Activated CD8-positive, alpha-beta memory T cell treated with anti-CD3 and anti-CD28 coated beads, Interleukin-2, amount 10 ng/mL, durations not matched to agents 7 days and 5 days (primary cell): ENCODE measurements at regions of chr15 and their contacts with region 1.

Region 1: DNA sequence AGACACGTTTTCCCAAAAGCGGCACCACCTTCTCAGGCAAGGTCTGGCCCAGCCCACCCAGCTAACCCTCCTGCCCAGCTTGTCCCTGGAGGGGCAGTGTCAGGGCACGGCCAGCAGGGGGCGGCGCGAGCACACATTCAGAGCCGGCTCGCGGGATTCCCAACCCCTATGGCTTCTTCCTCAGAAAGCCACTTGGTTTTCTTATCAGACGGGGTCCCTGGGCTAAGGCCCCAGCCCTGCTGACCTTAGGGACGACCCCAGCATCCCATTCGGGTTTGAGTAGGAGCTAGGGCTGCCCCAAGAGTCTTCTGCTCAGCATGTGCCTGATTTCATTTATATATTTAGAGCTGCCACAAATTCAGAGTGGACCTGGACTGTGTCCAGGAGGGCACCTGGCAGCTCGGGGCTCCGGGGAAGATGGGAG is 14.5 kb downstream of the RLBP1 start:
- DNase-seq: peak; percentile 76
- ATAC-seq: peak; percentile 73
- H3K4me3 Mint-ChIP-seq: no peak overlapping the region
- H3K27ac Mint-ChIP-seq: no peak overlapping the region
- H3K4me1 Mint-ChIP-seq: peaks cover 36% of the 10 kb centered on the region
- H3K27me3 Mint-ChIP-seq: peaks cover 7% of the 10 kb centered on the region

Region 2: GRCh38 chr15:89057504-89058133 is 149.3 kb before region 1 on chr15:
- CTCF ChIA-PET with region 1: interaction called, 25 read pairs
- DNase-seq: peak; percentile 84
- ATAC-seq: peak; percentile 93
- H3K4me3 Mint-ChIP-seq: no peak overlapping the region
- H3K27ac Mint-ChIP-seq: no peak overlapping the region
- H3K4me1 Mint-ChIP-seq: peaks cover 6% of the 10 kb centered on the region
- H3K27me3 Mint-ChIP-seq: peaks cover 11% of the 10 kb centered on the region

Region 3: DNA sequence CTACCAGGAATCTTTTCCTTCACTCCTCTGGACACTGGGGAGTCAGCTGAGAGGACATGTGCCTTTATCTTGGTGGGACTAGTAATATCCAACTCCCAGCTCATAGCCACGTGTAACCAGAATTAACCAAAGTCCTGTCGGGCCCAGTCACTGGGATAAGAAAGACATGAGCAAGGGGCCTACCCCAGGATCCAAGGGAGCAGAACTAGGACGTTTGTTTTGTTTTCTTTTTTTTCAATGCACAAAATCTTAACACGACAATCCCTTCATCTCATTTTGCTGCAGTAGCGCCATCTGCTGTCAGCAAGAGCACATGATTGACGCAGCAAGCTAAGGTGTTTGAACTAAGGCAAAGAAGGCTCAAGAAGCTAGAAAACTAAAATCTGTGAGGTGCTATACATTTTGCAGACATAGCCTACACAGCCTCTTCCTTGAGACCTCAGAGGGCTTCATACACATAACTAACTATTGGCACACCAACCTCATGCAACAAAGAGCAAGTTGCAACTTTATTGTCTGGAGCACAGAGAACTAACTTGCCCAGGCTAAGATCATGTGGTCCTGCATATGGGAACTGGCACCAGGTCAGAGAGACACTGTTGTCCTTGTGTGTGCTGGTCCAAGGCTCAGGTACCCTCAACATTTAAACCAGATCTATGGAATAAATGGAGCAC is 29.1 kb before region 1 on chr15:
- CTCF ChIA-PET with region 1: interaction called, 27 read pairs
- DNase-seq: peak; percentile 78
- ATAC-seq: peak; percentile 55
- H3K4me3 Mint-ChIP-seq: no peak overlapping the region
- H3K27ac Mint-ChIP-seq: no peak overlapping the region
- H3K4me1 Mint-ChIP-seq: peaks cover 8% of the 10 kb centered on the region
- H3K27me3 Mint-ChIP-seq: no peaks in the 10 kb centered on the region

Region 4: DNA sequence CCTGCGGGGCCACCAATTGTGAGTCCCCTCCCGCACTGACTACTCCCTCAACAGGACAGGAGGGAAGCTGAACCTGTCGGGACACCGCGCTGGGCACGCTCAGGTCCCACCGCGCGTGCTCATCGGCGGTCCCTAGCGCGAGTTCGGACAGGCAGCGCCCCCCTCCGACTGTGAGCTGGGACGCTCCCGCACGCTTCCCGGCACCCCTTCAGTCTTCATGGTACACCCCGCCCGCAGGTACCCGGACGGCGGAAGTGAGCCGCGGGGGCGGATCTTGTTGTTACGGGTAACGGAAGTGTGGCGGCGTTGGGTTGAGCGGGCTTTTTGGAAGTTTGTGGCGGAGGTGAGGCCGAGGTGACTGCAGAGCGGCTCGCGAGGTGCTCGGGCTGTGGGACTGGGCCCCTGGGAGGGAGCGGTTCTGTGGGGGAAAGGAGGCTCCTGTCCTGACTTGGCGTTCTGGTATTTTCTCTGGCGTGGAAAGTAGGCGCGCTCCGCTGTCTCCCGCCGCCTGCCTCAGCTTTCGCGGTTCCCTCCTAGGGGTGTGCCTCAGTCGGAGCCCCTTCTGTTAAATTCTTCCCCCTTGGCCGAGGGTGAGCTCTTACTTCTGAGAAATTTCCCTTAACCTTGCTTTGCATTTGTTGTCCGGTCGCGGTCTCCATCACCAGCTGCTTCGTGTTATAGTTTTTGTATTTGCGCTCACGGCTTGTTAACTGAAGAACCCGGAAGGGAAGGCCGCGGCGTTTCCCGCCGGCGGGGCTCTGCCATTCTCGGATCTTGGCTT is 37.0 kb after region 1 on chr15 and contains the start of gene FANCI:
- CTCF ChIA-PET with region 1: interaction called, 108 read pairs
- DNase-seq: peak; percentile 98
- ATAC-seq: peak; percentile 93
- H3K4me3 Mint-ChIP-seq: peak within 1 kb of the TSS; percentile 89
- H3K27ac Mint-ChIP-seq: peak within 1 kb of the TSS; percentile 92
- H3K4me1 Mint-ChIP-seq: peaks cover 42% of the 10 kb centered on the region
- H3K27me3 Mint-ChIP-seq: peaks cover 7% of the 10 kb centered on the region
- total RNA-seq, gene FANCI: 206 to 236 TPM

Region 5: GRCh38 chr15:89299896-89300295 is 93.0 kb after region 1 on chr15:
- CTCF ChIA-PET with region 1: interaction called, 28 read pairs
- DNase-seq: no peak
- ATAC-seq: no peak
- H3K4me3 Mint-ChIP-seq: no peak overlapping the region
- H3K27ac Mint-ChIP-seq: peak overlapping the region; percentile 79
- H3K4me1 Mint-ChIP-seq: peaks cover 50% of the 10 kb centered on the region
- H3K27me3 Mint-ChIP-seq: no peaks in the 10 kb centered on the region

Region 6: DNA sequence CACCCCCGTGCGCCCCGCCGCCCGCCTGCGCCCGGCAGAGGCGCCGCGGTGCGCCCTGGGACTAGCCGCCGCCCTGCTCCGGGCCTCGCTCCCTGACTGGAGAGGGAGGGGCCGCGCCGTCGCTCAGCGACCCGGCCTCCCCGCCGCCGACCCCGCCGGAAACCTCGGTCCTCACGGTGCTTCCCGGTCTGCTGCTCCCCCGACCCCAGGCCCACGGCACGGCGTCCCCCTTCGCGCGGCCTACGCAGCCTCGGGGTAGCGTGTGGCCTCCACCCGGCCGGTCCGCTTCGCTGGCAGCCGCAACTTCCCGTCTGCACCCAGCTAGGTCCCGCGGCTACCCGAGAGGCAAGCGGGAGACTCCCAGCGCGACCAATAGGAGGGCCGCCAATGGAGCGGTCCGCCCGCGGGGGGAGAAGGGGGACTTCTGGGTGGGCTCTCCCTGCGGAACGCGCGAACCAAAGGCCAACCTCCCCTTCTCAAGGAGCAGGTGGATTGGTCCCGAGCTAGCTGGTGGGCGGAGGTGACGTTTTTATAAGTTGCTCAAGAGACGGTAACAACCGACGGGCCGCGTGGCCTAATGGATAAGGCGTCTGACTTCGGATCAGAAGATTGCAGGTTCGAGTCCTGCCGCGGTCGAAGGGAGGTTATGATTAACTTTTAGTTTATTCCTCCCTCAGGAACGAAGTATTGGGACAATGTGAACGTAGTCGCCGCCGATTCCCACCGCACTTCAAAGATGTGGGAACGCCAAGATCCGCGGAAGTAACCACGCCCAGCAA is 127.8 kb after region 1 on chr15 and contains the start of gene POLG:
- CTCF ChIA-PET with region 1: interaction called, 18 read pairs
- DNase-seq: peak; percentile 99
- ATAC-seq: peak; percentile 93
- H3K4me3 Mint-ChIP-seq: peak within 1 kb of the TSS; percentile 83
- H3K27ac Mint-ChIP-seq: peak within 1 kb of the TSS; percentile 87
- H3K4me1 Mint-ChIP-seq: peaks cover 49% of the 10 kb centered on the region
- H3K27me3 Mint-ChIP-seq: peaks cover 10% of the 10 kb centered on the region
- total RNA-seq, gene POLG: 117 to 119 TPM

Region 7: GRCh38 chr15:89346516-89347231 is 139.8 kb after region 1 on chr15:
- CTCF ChIA-PET with region 1: no interaction called
- DNase-seq: no peak
- ATAC-seq: no peak
- H3K4me3 Mint-ChIP-seq: no peak overlapping the region
- H3K27ac Mint-ChIP-seq: no peak overlapping the region
- H3K4me1 Mint-ChIP-seq: peaks cover 8% of the 10 kb centered on the region
- H3K27me3 Mint-ChIP-seq: peaks cover 31% of the 10 kb centered on the region